Left cardiac atrium (tissue), 4 donors: ENCODE measurements at regions of chr12 and their contacts with region 1.

Region 1: DNA sequence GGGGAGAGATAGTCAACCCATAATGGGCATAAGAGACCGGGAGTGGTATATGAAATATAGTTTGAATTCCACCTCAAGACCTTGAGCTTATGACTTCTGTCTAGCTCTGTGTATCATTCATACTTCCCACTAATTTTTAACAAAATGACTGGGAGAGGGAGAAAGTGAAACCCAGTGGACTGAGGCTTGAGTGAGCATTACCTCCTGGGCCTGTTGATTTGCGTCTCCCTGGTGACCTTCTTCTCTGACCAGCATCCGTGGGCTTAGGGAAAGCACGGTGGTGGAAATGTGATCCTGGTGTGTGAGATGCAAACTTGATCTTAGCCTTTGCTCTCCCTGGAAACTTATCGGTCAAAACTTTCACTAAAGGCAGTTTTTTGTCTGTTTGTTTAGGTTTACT is 207.9 kb upstream of the BCL2L14 start:
- DNase-seq: no peak
- ATAC-seq: peak; percentile 64 to 73

Region 2: GRCh38 chr12:11649703-11650521 is 212.9 kb before region 1 on chr12:
- intact Hi-C with region 1: loop called in 1 of 2 experiments (anchors 10 kb)
- DNase-seq: peak; percentile 51
- ATAC-seq: peak; percentile 15 to 29

Region 3: DNA sequence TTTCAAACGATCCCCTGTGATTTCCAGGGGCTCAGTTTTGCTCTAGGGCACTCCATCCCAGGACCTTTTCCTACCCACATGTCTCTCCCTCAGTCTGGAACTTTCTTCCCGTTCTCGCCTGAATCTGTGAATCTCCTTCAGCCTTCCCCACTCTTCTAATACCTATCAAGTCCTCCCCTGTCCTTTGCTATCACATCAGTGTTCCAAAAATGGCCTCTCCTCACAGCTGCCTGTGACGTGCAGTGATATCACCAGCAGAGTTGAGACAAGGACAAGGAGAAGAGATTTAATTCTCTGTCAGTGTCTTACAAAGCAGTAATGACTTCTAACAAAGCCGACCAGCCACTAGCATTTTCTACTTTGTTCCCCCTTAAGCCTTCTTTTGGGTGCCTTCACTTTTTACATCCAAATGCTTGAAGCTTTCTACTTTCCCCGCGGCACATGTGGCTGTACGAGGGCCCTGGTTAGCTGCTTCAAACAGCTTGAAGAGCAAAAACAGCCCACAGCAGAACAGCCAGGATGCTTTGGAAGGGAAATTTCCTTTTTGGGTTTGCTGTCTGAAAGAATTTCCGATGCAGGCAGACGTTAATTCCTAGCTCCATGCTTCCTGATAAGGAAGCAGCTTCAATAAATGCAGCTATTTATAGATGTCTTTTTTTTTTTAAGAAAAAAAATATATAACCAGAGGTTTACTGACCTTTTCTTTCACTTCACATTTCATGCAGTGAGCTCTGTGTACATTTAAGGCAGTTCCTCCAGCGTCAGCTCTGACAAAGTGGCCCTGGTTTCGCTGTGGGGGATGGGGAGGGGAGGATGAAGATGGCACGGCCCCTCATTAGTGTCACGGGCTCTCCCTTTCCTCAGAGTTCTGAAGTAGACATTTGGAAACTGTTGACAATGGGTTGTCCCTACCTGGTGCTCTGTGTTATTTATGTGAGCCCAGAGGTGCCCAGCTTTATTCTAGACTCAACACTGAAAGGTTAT is 104.0 kb before region 1 on chr12:
- intact Hi-C with region 1: loop called in 1 of 2 experiments (anchors 10 kb)
- DNase-seq: peak; percentile 37
- ATAC-seq: peak; percentile 57 to 60

Region 4: DNA sequence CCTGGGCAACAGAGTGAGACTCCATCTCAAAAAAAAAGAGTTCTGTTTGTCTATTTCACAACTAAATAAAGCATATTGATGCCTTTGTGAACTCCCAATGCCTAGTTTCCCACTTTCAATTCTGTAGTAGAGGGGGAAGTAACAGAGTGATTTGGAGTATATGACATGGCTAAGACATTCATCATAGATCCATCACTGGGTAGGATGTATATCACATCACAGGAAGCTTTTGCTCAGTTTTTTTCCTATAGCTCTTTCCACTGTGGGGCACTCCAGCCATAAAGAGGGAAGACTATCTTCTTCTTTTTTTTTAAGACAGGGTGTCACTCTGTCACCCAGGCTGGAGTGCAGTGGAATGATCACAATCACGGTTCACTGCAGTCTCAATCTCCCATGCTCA is 54.0 kb after region 1 on chr12:
- intact Hi-C with region 1: no loop called
- DNase-seq: no peak
- ATAC-seq: no peak